ENCODE measurements at regions of chr20 and their contacts with region 1.

Region 1: DNA sequence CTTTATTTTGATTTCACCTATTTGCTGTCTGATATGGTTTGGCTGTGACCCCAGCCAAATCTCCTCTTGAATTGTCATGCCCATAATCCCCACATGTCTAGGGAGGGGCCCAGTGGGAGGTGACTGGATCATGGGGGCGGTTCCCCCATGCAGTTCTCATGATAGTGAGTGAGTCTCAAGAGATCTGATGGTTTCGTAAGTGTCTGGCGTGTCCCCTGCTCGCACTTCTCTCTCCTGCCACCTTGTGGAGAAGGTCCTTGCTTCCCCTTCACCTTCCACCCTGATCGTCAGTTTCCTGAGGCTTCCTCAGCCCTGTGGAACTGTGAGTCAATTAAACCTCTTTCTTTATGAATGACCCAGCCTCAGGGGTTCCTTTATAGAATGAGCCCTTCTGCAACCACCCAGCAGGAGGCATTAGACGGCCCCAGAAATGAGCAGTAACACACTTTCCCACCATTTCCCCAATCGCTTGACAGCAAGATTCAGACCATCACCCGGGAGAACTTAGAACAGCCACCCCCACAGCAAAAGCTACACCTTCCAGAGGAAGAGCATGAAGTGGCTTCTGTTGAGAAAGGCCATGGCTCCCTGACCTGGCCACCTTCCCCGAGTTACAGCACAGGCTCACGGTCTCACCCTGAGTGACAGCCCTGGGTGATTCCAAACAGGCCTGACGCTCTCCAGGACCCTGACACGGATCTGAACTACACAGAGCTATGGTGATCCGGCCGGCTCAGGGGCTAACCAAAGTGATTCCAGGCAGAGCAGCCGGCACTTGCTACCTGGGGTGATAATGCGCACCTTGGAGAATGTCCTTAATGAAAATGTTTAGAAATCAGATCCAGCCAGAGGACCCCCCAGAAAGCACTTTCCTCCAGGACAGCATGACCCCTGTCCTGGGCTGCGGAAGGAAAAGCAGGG is 131.2 kb upstream of the CDH4 start:
- DNase-seq: peak in 3 of 6 donors; percentile 20 to 49 (median 26)
- ATAC-seq: peak in 3 of 4 donors; percentile 59 to 77 (median 75)
- H3K4me3 ChIP-seq: no peak overlapping the region
- H3K27ac ChIP-seq: no peak overlapping the region
- H3K4me1 ChIP-seq: no peaks in the 10 kb centered on the region
- H3K27me3 ChIP-seq: no peaks in the 10 kb centered on the region
- CTCF ChIP-seq: peak in 3 of 4 donors; percentile 26 to 28 (median 28)

Region 2: GRCh38 chr20:60851826-60852704 is 268.8 kb before region 1 on chr20:
- intact Hi-C with region 1: loop called in 1 of 3 experiments (anchors 10 kb)
- DNase-seq: peak in 2 of 6 donors; percentile 6 to 21
- ATAC-seq: peak in 3 of 4 donors; percentile 47 to 81 (median 58)
- H3K4me3 ChIP-seq: no peak overlapping the region
- H3K27ac ChIP-seq: no peak overlapping the region
- H3K4me1 ChIP-seq: no peaks in the 10 kb centered on the region
- H3K27me3 ChIP-seq: peaks cover 0 to 4% (median 0%) of the 10 kb centered on the region in 4 donors
- CTCF ChIP-seq: peak in 1 of 4 donors; percentile 24

Measured in pancreas (tissue), 10 donors.